Heart left ventricle (tissue), 16 donors: ENCODE measurements at regions of chr11 and their contacts with region 1.

Region 1: GRCh38 chr11:67288452-67289225 is 464 bp upstream of the ANKRD13D start:
- DNase-seq: peak; percentile 91 to 94 (median 92)
- ATAC-seq: peak; percentile 48 to 87 (median 84)
- H3K4me3 ChIP-seq: peak overlapping the region; percentile 70 to 95 (median 86)
- H3K27ac ChIP-seq: peak overlapping the region; percentile 89 to 100 (median 94)
- H3K4me1 ChIP-seq: peaks cover 5 to 88% (median 31%) of the 10 kb centered on the region in 12 donors
- H3K27me3 ChIP-seq: no peaks in the 10 kb centered on the region
- CTCF ChIP-seq: peak; percentile 19 to 67 (median 54)
- POLR2A ChIP-seq: peak in 1 of 2 donors; percentile 48

Region 2: DNA sequence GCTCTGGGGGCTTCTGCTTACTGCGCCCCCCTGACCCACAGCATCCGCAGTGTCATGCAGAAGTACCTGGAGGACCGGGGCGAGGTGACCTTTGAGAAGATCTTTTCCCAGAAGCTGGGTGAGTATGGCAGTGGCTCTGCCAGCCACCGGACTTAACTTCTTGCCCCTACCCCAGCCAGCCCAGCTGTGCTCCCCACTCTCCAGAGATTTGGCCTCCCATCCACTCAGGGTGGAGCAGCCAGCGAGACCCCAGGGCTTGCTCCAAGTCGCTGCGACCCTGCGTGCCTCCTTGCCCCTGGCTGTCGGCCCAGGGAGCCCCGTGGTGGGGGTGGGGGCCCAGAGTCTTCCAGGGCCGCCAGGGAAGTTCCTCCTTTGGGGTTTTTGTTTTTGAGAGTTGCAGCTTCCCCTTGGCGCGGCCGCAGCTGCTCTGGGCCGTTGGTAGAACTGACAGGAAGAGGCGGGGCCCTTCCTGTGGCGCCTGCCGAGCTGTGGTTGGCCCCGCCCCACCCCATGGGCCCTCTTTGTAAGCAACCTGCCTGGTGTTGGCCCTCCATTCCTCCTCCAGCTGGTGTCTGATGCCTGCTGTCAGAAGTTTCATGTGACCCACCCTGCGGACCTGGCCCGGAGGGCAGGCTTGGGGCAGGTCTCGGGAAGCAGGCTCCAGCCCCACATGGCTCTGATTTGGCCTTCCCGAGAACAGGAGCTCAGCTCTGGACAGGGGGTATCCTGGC is 11.2 kb before region 1 on chr11:
- intact Hi-C with region 1: loop called in 1 of 10 experiments (anchors 1 kb)
- DNase-seq: peak; percentile 91 to 97 (median 93)
- ATAC-seq: peak; percentile 76 to 90 (median 88)
- H3K4me3 ChIP-seq: peak overlapping the region in 10 of 12 donors; percentile 22 to 54 (median 42)
- H3K27ac ChIP-seq: peak overlapping the region; percentile 78 to 100 (median 88)
- H3K4me1 ChIP-seq: peaks cover 28 to 99% (median 73%) of the 10 kb centered on the region in 12 donors
- H3K27me3 ChIP-seq: no peaks in the 10 kb centered on the region
- CTCF ChIP-seq: no peak
- POLR2A ChIP-seq: peak in 1 of 2 donors; percentile 52

Region 3: GRCh38 chr11:67303132-67303834 is 14.6 kb after region 1 on chr11 and contains the start of gene SSH3:
- intact Hi-C with region 1: loop called in 1 of 10 experiments (anchors 2 kb)
- DNase-seq: peak; percentile 81 to 89 (median 83)
- ATAC-seq: peak; percentile 76 to 90 (median 88)
- H3K4me3 ChIP-seq: peak within 1 kb of the TSS; percentile 67 to 98 (median 92)
- H3K27ac ChIP-seq: peak within 1 kb of the TSS; percentile 20 to 89 (median 80)
- H3K4me1 ChIP-seq: peaks cover 8 to 35% (median 24%) of the 10 kb centered on the region in 12 donors
- H3K27me3 ChIP-seq: no peaks in the 10 kb centered on the region
- CTCF ChIP-seq: no peak
- POLR2A ChIP-seq: peak in 1 of 2 donors; percentile 65
- total RNA-seq, gene SSH3: 10.8 to 23.9 (median 16.8) TPM

Region 4: DNA sequence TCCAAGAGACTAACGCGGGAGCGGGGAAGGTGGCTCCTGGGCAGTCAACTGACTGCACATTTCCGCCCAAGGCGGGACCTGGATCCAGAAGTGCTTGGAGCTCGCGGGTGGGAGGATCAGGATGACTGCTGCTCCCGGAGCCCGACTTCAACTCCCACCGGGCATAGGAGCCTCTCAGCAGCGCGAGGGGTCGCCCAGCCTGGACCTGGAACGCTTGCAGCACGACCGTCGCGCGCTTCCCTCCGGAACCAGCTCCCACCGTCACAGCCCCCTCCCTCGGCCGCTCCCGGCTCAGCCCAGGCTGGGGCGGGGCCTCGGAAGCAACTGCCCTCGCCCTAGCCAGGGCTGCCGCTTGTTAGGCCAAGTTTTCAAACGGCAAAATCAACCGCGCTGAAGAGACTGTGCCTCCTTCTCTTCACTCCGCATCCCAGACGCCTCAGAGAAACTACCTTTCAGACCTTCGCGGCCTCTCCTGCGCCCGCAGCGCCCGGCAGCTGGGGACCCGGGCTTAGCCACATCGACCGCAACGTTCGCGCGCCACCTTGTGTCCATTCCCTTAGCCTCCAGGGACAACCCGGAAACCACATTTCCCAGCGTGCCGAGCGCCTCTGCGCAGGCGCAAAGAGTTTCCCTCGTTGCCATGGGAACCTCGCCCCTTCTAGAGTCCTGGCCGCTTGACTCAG is 28.7 kb after region 1 on chr11:
- intact Hi-C with region 1: loop called in 2 of 10 experiments (anchors 1 to 2 kb)
- DNase-seq: peak; percentile 94 to 98 (median 96)
- ATAC-seq: peak; percentile 92 to 96 (median 94)
- H3K4me3 ChIP-seq: peak overlapping the region; percentile 69 to 97 (median 84)
- H3K27ac ChIP-seq: peak overlapping the region; percentile 68 to 98 (median 95)
- H3K4me1 ChIP-seq: peaks cover 0 to 26% (median 12%) of the 10 kb centered on the region in 12 donors
- H3K27me3 ChIP-seq: no peaks in the 10 kb centered on the region
- CTCF ChIP-seq: peak; percentile 86 to 99 (median 97)
- POLR2A ChIP-seq: peak in 1 of 2 donors; percentile 63

Region 5: DNA sequence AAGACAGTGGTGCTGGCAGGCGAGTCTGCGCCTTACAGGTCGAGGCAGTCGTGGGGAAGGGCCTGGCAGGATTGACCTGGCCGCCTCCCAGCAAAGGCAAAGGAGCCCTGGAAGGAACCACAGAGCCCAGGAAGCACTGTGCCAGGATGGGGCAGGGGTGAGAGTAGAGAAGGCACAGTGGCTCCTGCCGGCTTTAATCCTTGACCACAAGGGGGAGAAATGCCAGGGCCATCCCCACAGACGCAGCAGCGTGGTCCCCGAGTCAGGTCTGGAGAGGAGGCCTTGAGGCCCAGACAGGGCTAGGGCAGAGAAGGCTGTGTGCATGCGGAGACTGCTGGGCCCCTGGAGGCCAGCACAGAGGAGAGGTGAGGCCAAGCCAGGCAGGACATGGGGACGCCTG is 731.9 kb after region 1 on chr11:
- intact Hi-C with region 1: no loop called
- DNase-seq: peak in 1 of 5 donors; percentile 40
- ATAC-seq: peak in 3 of 4 donors; percentile 6 to 29 (median 21)
- H3K4me3 ChIP-seq: no peak overlapping the region
- H3K27ac ChIP-seq: no peak overlapping the region
- H3K4me1 ChIP-seq: peaks cover 0 to 12% (median 1%) of the 10 kb centered on the region in 12 donors
- H3K27me3 ChIP-seq: no peaks in the 10 kb centered on the region
- CTCF ChIP-seq: peak in 4 of 12 donors; percentile 19 to 28 (median 24)
- POLR2A ChIP-seq: no peak